PC-3 (cell line): ENCODE measurements at regions of chr18 and their contacts with region 1.

Region 1: DNA sequence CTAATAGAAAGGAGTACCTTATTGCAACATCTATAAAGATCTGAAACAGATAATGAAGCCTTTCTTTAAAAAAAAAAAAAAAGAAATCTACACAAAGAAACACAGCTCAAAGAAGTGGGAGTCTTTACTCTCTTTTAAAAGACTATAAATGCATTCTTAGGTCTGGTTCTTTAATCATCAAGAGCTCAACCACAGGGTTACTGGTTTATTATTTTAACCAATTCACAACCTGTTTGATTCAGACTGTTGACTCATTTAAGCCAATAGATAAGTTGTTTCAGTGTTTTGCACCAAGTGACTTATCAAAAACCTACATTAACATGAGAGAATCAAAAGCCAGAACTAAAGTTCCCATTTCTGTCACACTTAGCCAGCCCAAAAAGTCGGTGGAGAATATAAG is 93.1 kb downstream of the TCF4 start:
- DNase-seq: peak; percentile 20
- ATAC-seq: peak; percentile 35
- H3K4me3 ChIP-seq: no peak overlapping the region
- H3K27ac ChIP-seq: no peak overlapping the region
- H3K4me1 ChIP-seq: 0 out of 2 replicates have a peak, but pooled peaks cover 7% of the 10 kb centered on the region
- H3K27me3 ChIP-seq: no peaks in the 10 kb centered on the region
- CTCF ChIP-seq: no peak

Region 2: GRCh38 chr18:55477499-55477859 is 17.4 kb before region 1 on chr18:
- CTCF ChIA-PET with region 1: no interaction called
- POLR2A ChIA-PET with region 1: no interaction called
- intact Hi-C with region 1: loop called (anchors 2 kb)
- DNase-seq: peak; percentile 45
- ATAC-seq: peak; percentile 98
- H3K4me3 ChIP-seq: peak overlapping the region; percentile 64
- H3K27ac ChIP-seq: no peak overlapping the region
- H3K4me1 ChIP-seq: 0 out of 2 replicates have a peak, but pooled peaks cover 10% of the 10 kb centered on the region
- H3K27me3 ChIP-seq: no peaks in the 10 kb centered on the region
- CTCF ChIP-seq: peak; percentile 31; the same call in 1 of the 2 replicates

Region 3: DNA sequence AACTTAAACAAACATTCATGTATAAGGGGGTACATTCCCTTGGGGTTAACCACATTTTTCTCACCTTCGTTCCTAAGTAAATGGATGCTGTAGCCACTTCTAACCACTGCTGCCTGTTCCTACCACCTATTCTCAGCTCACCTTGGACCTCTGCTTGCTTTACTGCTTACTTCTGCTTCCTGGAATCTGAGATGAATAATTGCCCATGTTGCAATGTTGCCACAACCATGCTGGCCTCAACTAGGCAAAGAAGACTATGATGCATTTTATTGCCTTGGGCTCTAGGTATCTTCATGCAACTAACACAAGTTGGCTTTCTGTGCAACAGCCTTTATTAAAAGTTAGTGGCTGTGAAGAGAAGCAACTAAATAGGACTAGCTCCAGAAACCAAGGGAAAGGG is 199.4 kb after region 1 on chr18:
- CTCF ChIA-PET with region 1: no interaction called
- POLR2A ChIA-PET with region 1: no interaction called
- intact Hi-C with region 1: no loop called
- DNase-seq: peak; percentile 17
- ATAC-seq: no peak
- H3K4me3 ChIP-seq: no peak overlapping the region
- H3K27ac ChIP-seq: no peak overlapping the region
- H3K4me1 ChIP-seq: no peaks in the 10 kb centered on the region
- H3K27me3 ChIP-seq: no peaks in the 10 kb centered on the region
- CTCF ChIP-seq: no peak